GM10248 (cell line): ENCODE measurements at regions of chr22 and their contacts with region 1.

Region 1: DNA sequence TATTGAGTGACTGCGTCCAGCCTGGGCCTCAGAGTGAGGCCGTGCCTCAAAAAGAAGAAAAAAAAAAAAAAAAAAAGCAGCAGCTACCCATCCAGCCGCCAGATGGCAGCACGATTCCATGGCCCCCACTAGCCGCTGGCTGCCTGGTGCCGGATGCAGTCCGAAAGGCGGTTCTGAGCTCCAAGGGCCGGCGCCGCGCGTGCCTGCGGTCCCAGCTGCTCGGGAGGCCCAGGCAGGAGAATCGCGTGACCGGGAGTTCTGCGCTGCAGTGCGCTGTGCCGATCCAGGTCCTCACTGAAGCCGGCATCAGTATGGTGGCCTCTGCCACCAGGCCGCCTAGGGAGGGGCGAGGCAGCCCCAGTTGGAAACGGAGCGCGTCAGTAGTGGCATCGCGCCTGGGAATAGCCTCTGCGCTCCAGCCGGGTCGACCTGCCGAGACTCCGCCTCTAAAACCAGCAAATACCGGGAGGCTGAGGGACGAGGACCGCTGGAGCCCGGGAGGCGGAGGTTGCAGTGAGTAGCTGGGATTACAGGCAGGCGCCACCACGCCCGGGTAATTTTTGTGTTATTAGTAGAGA is 19.3 kb downstream of the SCARF2 start:
- DNase-seq: peak; percentile 86
- CTCF ChIP-seq: peak; percentile 72

Region 2: DNA sequence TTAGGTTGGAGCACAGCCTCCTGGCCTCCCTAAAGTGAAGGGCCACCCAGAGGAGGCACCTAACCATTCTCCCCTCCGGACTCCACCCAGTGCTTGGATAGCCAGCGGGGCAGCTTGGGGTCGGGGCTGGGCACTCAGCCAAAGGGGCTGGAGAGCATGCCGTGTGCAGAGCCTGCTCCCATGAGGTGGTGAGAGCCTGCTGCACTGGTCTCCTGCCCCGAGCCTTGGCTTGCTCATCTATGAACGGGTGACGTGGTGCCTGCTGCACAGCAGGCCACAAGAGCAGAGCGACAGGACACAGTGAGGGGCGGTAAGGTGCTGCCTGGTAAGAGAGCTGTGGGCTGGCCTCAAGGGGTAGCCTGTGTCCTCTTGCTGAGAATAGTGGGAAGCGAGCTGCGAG is 253.4 kb before region 1 on chr22:
- CTCF ChIA-PET with region 1: no interaction called
- POLR2A ChIA-PET with region 1: no interaction called
- DNase-seq: no peak
- CTCF ChIP-seq: no peak

Region 3: DNA sequence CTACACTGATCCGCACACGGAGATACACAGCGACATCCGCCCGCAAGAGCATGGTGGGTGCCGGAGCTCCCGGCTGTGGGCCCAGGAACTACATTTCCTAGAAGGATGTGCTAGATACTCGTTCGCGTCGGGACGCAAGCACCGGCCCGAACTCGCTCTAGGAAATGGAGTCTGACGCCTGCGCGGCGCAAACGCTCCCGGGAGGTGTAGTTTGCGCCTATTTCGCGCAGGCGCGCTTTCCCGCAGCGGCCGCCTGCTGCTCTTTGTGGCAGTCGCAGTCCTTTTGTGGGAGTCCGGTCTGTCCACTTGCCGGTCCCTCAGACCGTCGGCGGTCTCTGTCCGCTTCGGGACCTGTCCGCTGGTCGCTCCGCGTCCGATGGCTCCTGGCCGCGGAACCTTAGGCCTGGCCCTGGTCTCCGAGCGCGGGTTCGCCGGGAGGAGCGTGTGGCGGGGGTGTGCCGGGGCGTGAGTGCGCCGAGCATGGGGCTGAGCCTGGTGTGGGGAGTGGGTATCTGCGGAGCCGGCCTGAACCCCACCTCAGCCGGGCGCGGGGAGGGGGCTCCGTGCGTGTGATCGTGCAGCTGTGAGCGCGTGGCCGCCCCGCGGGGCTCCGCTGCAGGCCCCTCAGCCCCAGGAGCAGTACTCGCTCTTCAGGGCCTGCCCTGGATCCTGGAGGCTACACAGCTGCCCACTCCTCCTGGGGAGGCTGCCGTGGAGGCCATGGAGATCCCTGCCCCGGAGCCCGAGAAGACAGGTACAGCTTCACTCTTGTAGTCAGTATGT is 24.2 kb before region 1 on chr22 and contains the start of gene ZNF74:
- CTCF ChIA-PET with region 1: interaction called, 11 read pairs
- POLR2A ChIA-PET with region 1: no interaction called
- DNase-seq: peak; percentile 88
- CTCF ChIP-seq: no peak

Region 4: DNA sequence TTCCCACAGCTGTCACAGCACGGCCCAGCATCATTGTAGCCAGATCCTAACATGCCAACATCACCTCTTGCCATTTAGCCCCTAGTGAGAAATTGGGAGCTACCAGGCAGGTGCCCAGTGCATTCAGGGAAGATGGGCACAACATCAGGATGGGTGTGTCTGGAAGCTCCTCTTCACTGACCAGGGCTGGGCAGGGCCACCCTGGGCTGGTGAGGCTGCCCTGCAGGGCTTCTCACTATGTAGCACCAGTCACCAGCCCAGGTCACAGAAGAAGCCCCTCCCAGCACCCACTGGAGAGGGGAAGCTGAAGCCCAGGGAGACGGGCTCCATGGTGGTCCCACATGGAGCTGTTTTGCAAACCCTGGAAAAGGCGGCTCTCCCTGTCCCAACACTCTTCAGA is 10.5 kb before region 1 on chr22:
- CTCF ChIA-PET with region 1: interaction called, 17 read pairs
- POLR2A ChIA-PET with region 1: no interaction called
- DNase-seq: no peak
- CTCF ChIP-seq: no peak

Region 5: DNA sequence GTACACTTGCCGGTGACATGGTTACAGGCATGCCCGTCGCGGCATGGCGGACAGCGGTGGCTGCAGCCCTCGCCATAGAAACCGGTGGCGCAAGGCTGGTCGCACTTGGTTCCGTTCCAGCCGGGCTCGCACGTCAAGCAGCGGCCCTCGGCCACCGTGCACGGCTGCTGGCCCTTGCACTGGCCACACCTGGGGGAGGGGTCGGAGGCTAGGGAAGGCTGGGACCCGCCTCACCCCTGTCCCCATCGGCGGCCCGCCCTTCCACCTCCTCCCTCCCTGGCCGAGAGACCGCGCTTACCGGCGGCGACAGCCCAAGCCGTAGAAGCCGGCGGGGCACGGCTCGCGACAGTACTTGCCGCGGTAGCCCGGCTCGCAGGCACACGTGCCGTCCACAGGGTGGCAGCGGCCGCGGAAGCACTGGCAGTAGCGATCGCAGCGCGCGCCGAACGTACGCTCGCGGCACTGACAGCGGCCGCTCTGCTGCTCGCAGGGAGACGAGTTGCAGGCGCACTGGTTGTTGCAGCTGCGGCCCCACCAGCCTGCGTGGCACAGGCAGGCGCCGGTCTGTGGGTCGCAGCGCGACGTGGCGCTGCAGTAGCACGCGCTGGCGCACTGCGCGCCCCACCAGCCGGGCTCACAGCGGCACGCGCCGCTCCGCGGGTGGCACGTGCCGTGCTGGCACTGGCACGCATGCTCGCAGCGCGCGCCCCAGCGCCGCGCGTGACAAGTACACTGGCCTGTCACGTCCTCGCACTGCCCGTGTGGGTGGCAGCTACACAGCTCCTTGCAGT is 12.6 kb after region 1 on chr22:
- CTCF ChIA-PET with region 1: interaction called, 21 read pairs
- POLR2A ChIA-PET with region 1: no interaction called
- DNase-seq: no peak
- CTCF ChIP-seq: no peak

Region 6: GRCh38 chr22:20456064-20456721 is 37.9 kb after region 1 on chr22:
- CTCF ChIA-PET with region 1: interaction called, 42 read pairs
- POLR2A ChIA-PET with region 1: no interaction called
- DNase-seq: peak; percentile 88
- CTCF ChIP-seq: peak; percentile 86